Activated CD4-positive, alpha-beta T cell treated with anti-CD3 and anti-CD28 coated beads, Interleukin-2, amount 10 ng/mL, durations not matched to agents 24 days and 14 days (primary cell): ENCODE measurements at regions of chr6 and their contacts with region 1.

Region 1: DNA sequence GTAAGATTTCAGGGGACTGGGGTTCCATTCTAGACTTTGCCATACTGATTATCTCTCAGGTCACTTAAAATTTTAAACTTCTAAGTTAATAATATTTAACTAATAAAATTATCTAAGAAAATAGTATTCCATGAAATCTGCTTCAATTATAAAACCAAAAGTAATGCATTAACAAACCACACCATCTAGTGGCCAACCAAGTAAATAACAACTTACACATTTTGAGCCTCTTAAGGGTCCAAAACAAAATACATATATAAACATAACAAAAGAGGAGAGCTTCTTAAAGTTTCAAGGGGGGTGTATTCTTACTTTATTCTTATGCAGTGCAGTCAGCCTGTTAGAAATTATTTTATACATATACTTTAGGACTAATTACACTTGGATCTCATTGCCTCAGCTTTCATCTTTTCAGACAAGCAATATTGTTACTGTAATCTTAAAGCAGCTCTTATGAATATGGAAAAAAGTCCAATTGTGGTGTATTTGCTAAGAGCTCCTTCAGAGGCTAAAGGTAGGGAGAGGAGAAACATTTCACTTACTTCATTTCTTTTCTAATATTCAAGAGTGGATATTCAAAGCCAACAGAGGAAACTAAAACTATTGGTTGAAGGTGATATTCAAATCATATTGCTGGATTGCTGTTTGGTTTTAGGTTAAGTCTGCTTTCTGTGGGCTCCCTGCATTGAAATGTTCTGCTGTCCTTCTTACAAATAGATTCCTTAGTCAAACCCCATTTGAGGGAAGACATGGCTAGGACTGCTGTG is 199.7 kb upstream of the SIM1 start:
- DNase-seq: no peak
- H3K4me3 Mint-ChIP-seq: no peak overlapping the region
- H3K27ac Mint-ChIP-seq: no peak overlapping the region
- H3K4me1 Mint-ChIP-seq: peaks cover 6% of the 10 kb centered on the region
- H3K27me3 Mint-ChIP-seq: no peaks in the 10 kb centered on the region

Region 2: DNA sequence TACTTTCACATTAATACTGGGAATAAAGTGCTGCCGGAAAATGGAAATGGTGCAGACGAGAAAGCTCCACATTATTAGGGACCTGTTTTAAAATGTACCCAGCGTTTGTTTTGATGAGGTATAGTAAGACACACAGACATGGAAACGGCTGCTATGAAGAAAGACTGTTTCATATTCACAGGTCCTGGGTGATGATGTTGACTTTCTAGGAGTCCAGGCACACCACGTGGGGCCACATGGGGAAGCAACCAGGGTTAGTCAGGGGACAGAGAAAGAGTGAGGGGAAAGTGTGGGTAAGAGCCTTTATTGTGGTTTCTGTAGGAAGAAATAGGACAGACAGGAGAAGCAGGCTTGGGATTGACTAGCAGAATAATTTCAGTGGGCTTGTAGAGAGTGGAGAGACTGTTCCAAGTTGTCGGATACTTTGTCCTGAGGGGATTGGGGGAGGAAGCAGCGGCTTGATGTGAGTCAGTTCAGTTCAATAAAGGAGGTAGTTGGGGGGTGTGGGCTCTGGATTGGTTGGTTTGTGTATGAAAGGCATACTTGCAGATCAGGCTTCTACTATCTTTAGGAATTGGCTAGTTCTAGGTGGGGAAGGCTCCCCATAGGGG is 558.4 kb before region 1 on chr6:
- intact Hi-C with region 1: loop called (anchors 2 kb)
- DNase-seq: no peak
- H3K4me3 Mint-ChIP-seq: no peak overlapping the region
- H3K27ac Mint-ChIP-seq: no peak overlapping the region
- H3K4me1 Mint-ChIP-seq: no peaks in the 10 kb centered on the region
- H3K27me3 Mint-ChIP-seq: peaks cover 10% of the 10 kb centered on the region

Region 3: DNA sequence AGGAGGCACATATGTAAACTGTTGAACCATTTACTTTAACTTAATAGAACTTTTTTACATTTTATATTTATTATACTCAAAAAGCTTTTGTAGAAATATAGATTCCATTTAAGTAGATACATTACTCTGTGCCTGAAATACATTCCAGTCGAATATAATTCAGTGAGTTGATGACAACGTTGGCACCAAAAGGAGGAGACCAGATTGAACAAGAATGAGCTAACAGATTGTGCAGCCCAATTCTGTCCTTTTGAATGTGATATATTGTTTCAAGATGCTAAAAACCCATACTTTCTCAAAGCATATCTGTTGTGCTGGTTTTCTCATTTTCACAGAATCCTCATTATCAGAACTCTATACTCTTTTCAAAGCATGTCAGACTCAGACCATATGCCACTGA is 52.4 kb before region 1 on chr6:
- intact Hi-C with region 1: no loop called
- DNase-seq: no peak
- H3K4me3 Mint-ChIP-seq: no peak overlapping the region
- H3K27ac Mint-ChIP-seq: no peak overlapping the region
- H3K4me1 Mint-ChIP-seq: no peaks in the 10 kb centered on the region
- H3K27me3 Mint-ChIP-seq: no peaks in the 10 kb centered on the region

Region 4: DNA sequence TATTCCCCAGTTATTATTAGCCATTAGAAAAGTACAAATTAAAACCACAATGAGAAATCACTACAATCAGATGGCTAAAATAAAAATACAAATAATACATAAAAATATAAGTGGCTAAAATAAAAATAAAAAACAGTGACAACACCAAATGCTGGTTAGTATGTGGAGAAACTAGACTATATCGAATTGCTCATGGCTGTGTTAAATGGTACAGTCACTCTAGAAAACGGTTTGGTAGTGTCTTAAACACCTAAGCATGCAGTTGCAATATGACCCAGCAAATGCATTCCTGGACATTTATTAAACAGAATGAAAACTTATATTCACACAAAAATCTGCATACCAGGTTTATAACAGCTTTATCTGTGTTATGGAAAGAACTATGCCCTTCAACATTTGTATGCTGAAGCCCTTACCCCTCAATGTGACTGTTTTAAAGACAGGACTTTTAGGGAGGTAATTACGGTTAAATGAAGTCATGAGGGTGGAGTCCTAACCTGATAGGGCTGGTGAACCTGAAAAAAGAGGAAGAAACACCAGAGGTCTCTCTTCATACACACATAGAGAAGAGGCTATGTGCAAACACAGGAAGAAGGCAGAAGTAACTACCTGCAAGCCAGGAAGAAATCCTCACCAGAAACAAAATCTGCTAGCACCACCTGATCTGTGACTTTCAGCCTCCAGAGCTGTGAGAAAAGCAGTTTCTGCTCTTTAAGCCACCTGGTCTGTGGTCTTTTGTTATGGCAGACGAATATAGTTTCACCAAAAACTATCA is 131.8 kb after region 1 on chr6:
- intact Hi-C with region 1: no loop called
- DNase-seq: no peak
- H3K4me3 Mint-ChIP-seq: no peak overlapping the region
- H3K27ac Mint-ChIP-seq: no peak overlapping the region
- H3K4me1 Mint-ChIP-seq: peaks cover 4% of the 10 kb centered on the region
- H3K27me3 Mint-ChIP-seq: no peaks in the 10 kb centered on the region